Calu3 (cell line): ENCODE measurements at regions of chr12 and their contacts with region 1.

Region 1: DNA sequence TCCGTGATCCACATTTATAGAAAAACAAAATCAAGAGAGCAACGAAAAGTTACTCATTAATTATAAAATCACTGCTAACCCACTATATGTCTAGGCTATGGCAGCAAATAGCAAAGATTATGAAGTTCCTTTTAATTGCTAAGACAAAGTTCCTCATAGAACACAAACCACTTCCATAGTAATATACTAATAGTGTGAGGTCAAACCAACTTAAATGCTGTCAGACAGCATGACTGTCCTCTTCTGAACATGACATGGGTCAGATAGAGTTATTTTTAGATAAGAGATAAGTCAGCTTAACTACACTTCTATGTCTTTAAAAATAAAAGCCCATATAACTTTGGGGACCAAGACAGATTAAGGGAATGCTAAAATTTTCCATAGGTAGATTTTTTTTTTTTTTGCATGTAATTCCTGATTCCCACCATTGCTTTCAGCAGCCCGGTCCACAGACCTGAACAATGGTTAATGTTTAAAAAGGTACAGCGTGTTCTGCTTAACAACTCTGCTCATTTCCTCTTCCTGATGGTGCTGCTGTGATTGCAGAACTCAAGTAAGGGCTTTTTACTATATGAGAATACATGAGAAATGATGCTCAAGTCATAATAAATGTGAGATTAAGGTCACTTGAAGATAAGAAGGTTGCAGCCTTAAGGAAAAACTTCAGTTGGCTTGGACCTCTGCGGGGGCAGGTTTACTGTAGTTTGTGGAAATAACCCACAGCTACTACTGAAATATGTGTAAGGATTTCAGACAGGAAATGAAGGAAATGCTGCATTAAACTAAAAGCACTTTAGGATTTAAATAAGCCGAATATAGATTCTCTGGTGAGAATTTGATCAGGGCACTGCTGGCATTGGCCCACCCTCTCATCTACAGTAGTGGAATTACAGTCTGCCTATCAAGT is 37.7 kb upstream of the DUSP6 start:
- DNase-seq: no peak
- H3K4me3 Mint-ChIP-seq: no peak overlapping the region
- H3K27ac Mint-ChIP-seq: peak overlapping the region; percentile 77
- H3K4me1 Mint-ChIP-seq: peaks cover 63% of the 10 kb centered on the region
- H3K27me3 Mint-ChIP-seq: no peaks in the 10 kb centered on the region
- CTCF ChIP-seq: no peak

Region 2: GRCh38 chr12:89373763-89374572 is 16.0 kb before region 1 on chr12:
- CTCF ChIA-PET with region 1: interaction called, 3 read pairs
- intact Hi-C with region 1: loop called (anchors 2 kb)
- DNase-seq: peak; percentile 53
- H3K4me3 Mint-ChIP-seq: no peak overlapping the region
- H3K27ac Mint-ChIP-seq: peak overlapping the region; percentile 99
- H3K4me1 Mint-ChIP-seq: peaks cover 77% of the 10 kb centered on the region
- H3K27me3 Mint-ChIP-seq: no peaks in the 10 kb centered on the region
- CTCF ChIP-seq: no peak